Left lung (tissue), 14 donors: ENCODE measurements at regions of chr18 and their contacts with region 1.

Region 1: DNA sequence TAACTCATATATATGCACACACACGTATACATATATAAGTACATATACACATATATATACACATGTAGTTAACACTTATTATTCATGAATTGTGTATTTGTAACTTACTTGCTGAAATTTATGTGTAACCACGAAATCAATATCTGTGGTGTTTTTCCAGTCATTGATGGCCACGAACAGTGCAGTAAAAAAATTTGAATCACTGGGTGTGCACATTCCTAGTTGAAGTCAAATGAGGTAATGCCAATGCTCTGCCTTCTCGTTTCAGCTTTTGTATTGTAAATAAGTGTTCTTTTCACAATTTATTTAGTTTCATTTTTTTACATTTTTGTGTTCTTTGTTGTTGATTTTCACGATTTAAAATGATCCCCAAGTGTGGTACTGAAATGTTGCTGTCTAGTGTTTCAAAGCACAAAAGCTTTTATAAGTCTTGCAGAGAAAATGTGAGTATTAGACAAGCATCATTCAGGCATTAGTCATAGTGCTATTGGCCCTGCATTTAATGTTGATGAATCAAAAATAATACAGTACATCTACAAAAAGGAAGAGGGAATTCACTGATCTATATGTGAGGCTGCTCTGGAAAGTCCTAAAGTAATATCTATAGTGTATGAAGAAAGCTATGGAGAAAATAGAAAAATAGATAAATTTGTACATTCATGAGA is 419.0 kb downstream of the DSC3 start:
- DNase-seq: no peak
- ATAC-seq: no peak
- H3K4me3 ChIP-seq: no peak overlapping the region
- H3K27ac ChIP-seq: no peak overlapping the region
- H3K4me1 ChIP-seq: no peaks in the 10 kb centered on the region
- H3K27me3 ChIP-seq: no peaks in the 10 kb centered on the region
- CTCF ChIP-seq: no peak

Region 2: GRCh38 chr18:30682672-30683071 is 59.1 kb after region 1 on chr18:
- intact Hi-C with region 1: loop called in 1 of 2 experiments (anchors 10 kb)
- DNase-seq: peak in 2 of 4 donors; percentile 20 to 42
- ATAC-seq: peak; percentile 46
- H3K4me3 ChIP-seq: no peak overlapping the region
- H3K27ac ChIP-seq: no peak overlapping the region
- H3K4me1 ChIP-seq: no peaks in the 10 kb centered on the region
- H3K27me3 ChIP-seq: no peaks in the 10 kb centered on the region
- CTCF ChIP-seq: no peak